ENCODE measurements at regions of chr13 and their contacts with region 1.

Region 1: GRCh38 chr13:97109841-97110492 is 112.2 kb upstream of the MBNL2 start:
- DNase-seq: peak; percentile 64
- ATAC-seq: peak; percentile 98
- H3K4me3 ChIP-seq: peak overlapping the region in 1 of 2 experiments; percentile 32; a peak in 3 of 4 replicates
- H3K27ac ChIP-seq: no peak overlapping the region
- H3K4me1 ChIP-seq: peaks cover 14 to 25% of the 10 kb centered on the region in 2 experiments
- H3K27me3 ChIP-seq: no peaks in the 10 kb centered on the region
- CTCF ChIP-seq: peak; percentile 75 to 95 (median 90)
- POLR2A ChIP-seq: no peak
- RAD21 ChIP-seq: peak; percentile 100

Region 2: DNA sequence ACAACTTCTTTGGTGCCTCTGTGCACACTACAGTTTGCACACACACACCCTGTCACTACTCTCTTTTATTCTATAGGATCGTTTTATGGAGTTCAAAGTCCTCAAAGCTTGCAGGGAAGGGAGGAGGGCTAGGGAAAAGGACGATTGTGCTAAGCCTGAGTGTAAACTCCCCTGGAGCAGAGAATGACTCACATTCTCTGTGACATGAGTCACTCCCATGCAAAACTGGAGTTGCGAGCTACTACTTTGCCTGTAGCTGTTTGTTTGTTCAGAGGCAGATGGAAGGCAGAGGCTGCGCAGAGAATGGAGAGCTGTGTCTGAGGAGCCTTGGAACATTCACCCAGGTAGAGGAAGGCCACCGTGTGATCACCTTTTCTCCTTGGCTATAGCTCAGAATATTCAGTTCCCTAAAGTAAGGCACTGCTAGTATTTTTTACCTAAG is 31.6 kb after region 1 on chr13:
- CTCF ChIA-PET with region 1: interaction called, 10 read pairs
- POLR2A ChIA-PET with region 1: interaction called, 7 read pairs
- RAD21 ChIA-PET with region 1: interaction called in 1 of 2 experiments, 4 read pairs
- intact Hi-C with region 1: no loop called
- DNase-seq: peak; percentile 90
- ATAC-seq: peak; percentile 88
- H3K4me3 ChIP-seq: peak overlapping the region; percentile 48 to 63
- H3K27ac ChIP-seq: peak overlapping the region; percentile 76
- H3K4me1 ChIP-seq: peaks cover 22 to 40% of the 10 kb centered on the region in 2 experiments
- H3K27me3 ChIP-seq: no peaks in the 10 kb centered on the region
- CTCF ChIP-seq: no peak
- POLR2A ChIP-seq: no peak
- RAD21 ChIP-seq: peak; percentile 32

Region 3: DNA sequence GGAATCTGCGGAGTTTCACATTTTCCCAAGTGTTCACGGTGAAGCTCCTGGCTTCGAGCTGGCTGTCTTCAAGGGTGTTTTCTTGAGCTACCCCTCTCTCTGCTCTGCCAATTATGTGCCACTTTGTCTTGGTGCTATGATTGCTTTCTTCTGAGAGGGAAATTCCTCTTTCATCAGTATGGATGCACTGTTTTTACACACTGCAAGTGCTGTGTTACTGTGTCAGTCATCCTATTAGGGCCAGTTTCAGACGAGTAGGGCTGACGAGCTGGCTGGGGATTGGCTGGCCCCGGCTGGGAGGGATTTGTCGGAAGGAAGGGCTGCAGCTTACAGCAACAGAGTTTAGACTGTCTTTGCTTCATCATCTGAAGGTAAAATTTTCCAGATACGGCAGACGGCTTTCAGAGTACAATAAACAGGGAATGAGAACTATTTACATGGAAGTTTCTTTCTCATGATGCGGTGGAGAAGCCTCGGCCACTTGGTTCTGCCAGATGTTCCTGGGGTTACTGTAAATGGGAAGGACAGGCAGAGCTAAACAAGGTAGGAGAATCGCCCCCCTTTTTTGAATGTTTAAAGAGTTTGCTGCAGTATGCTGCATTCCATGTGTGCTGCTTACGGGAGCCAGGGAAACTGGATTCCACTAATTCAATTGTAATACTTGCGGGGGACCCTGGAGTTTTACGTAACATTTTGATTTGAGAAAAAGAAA is 112.2 kb after region 1 on chr13 and contains the start of gene MBNL2:
- CTCF ChIA-PET with region 1: interaction called, 21 read pairs
- POLR2A ChIA-PET with region 1: interaction called, 5 read pairs
- RAD21 ChIA-PET with region 1: interaction called in 1 of 2 experiments, 3 read pairs
- intact Hi-C with region 1: no loop called
- DNase-seq: peak; percentile 81
- ATAC-seq: peak; percentile 99
- H3K4me3 ChIP-seq: peak within 1 kb of the TSS; percentile 74 to 85
- H3K27ac ChIP-seq: peak within 1 kb of the TSS; percentile 74
- H3K4me1 ChIP-seq: peaks cover 45 to 47% of the 10 kb centered on the region in 2 experiments
- H3K27me3 ChIP-seq: no peaks in the 10 kb centered on the region
- CTCF ChIP-seq: no peak
- POLR2A ChIP-seq: no peak
- RAD21 ChIP-seq: 0 out of 2 replicates have a peak, but pooled peaks have one; percentile 14
- total RNA-seq, gene MBNL2: 73.9 TPM

Region 4: GRCh38 chr13:97359181-97360057 is 249.5 kb after region 1 on chr13:
- CTCF ChIA-PET with region 1: interaction called, 33 read pairs
- POLR2A ChIA-PET with region 1: no interaction called
- RAD21 ChIA-PET with region 1: interaction called, 4 to 7 read pairs
- intact Hi-C with region 1: loop called (anchors 1 kb)
- DNase-seq: peak; percentile 44
- ATAC-seq: peak; percentile 94
- H3K4me3 ChIP-seq: no peak overlapping the region
- H3K27ac ChIP-seq: peak overlapping the region; percentile 28; the same call in 1 of the 2 replicates
- H3K4me1 ChIP-seq: no peaks in the 10 kb centered on the region
- H3K27me3 ChIP-seq: no peaks in the 10 kb centered on the region
- CTCF ChIP-seq: peak; percentile 71 to 94 (median 72); a peak in 5 of 6 replicates
- POLR2A ChIP-seq: no peak
- RAD21 ChIP-seq: peak; percentile 87

Measured in HCT116 (cell line).